Common myeloid progenitor, CD34-positive (primary cell): ENCODE measurements at regions of chr10 and their contacts with region 1.

Region 1: DNA sequence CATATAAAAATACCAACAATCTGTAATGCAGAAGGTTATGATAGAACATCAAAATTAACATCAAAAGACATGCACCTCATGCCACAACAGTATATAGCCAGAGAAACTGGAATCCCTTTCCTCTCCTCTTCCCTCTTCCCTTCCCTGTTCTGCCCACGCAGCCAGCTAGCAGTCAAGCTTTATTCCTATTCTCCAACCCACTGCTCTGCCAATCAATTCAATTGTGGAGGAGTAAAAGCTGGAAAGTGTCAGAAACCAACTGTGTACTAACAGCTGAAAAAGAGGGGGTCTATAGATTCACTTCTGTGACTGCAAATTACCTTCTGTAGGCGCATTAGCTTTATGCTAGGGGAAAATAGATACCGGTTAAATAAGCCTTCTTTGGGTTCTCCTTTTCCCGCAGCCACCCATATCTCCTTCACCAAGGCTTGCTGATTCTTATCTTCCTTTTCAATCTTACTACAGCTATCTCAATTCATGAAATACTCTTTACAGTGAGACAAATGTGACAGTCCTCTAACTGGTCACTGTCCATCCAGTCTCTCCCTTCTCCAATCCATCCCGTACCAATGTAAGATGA is 16.3 kb downstream of the ABI1 start:
- DNase-seq: peak in 2 of 3 donors; percentile 40 to 48
- H3K4me3 ChIP-seq: peak overlapping the region in 2 of 7 experiments; percentile 11 to 13
- H3K27ac ChIP-seq: no peak overlapping the region
- H3K4me1 ChIP-seq: peaks cover 17 to 35% (median 26%) of the 10 kb centered on the region in 4 experiments
- H3K27me3 ChIP-seq: no peaks in the 10 kb centered on the region

Region 2: DNA sequence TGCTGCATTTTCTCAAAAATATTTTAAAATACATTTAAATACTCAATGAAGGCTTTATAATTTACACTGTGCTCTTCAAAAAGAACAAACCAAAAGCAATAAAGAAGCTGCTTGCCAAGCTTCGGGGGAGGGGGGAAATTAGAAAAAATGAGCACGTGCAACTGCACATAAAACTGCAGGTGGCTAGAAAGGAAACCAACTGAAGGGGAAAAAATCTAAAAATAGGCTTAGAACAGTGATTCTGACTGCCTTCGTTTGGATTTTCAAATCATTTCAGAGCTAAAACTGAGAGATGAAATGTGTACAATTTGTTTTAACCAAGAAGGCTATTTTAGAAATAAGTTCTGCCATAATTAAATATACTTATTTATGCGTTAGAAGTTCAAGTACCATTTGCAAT is 45.1 kb before region 1 on chr10:
- CTCF ChIA-PET with region 1: no interaction called
- POLR2A ChIA-PET with region 1: no interaction called
- DNase-seq: peak; percentile 47 to 89 (median 81)
- H3K4me3 ChIP-seq: peak overlapping the region in 3 of 7 experiments; percentile 29 to 45 (median 40)
- H3K27ac ChIP-seq: no peak overlapping the region
- H3K4me1 ChIP-seq: peaks cover 16 to 27% (median 24%) of the 10 kb centered on the region in 4 experiments
- H3K27me3 ChIP-seq: no peaks in the 10 kb centered on the region

Region 3: DNA sequence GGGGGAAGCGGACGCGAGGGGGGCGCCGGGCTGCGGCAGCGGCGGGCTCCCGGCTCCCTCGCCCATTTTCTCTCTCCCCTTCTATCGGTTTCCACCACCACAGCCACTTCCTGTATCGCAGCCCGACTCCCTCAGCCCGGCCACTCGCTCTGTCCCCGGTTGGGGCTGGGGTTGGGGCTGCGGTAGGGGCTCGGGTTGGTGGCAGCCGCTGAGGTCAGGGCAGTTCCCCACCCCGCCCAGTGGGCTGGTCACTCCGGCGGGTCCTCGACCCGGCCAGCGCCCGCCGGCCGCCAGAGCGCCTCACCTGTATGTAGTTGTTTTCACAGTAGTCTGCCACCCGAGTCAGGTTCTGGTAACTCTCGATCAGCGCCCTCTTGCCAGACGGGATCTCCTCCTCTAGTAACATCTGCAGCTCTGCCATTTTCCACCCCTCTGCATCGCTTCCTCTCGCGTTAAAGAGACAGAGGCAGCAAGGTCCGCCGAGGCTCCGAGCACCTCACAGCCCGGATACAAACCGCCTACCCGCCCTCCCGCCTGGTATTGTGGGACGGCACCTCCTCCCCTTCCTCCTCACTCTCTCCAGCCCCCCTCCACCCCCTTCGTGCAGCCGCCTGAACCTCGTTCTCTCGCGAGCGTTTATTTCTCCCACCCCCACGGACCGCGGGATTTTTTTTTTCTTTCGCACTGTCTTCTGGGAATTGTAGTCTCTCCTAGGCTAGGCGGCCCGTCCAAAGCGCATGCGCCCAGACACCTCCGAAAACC is 16.1 kb after region 1 on chr10 and contains the start of gene ABI1:
- CTCF ChIA-PET with region 1: interaction called, 15 read pairs
- POLR2A ChIA-PET with region 1: no interaction called
- DNase-seq: peak; percentile 99 to 100 (median 99)
- H3K4me3 ChIP-seq: peak within 1 kb of the TSS; percentile 94 to 100 (median 97)
- H3K27ac ChIP-seq: peak within 1 kb of the TSS; percentile 89 to 96
- H3K4me1 ChIP-seq: peaks cover 17 to 34% (median 24%) of the 10 kb centered on the region in 4 experiments
- H3K27me3 ChIP-seq: no peaks in the 10 kb centered on the region